GM12878 (cell line): ENCODE measurements at regions of chr1 and their contacts with region 1.

Region 1: DNA sequence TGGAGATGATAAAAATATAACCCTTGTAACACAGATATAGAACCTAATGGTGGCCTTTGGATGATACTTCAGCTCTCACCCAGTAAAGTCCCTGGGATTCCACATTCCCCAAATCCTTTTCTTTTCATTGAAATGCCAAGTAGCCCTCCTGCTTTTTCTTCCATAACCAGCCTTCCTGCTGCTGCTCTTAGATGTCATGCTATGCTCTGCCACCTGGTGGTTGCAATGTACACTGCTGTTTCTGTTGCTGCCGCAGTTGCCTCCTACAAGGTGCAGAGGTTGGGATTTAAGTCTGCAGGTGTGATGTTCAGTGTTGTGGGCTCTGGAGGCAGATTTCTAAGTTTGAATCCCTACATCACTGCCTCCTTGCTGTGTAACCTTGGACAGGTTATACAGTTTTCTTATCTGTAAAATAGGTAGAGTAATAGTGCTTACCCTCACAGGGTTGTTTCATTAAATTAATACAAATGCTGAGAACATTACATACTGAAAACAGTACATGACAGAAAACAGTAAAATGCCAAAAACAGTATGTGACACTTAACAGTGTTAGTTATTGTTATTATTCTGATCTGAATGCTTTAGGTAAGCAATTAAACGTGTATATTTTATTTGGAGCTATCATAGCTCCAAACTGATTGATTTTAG is 64.3 kb downstream of the CAMSAP2 start:
- DNase-seq: peak; percentile 61
- ATAC-seq: peak; percentile 98
- H3K4me3 ChIP-seq: no peak overlapping the region
- H3K27ac ChIP-seq: no peak overlapping the region
- H3K4me1 ChIP-seq: no peaks in the 10 kb centered on the region
- H3K27me3 ChIP-seq: no peaks in the 10 kb centered on the region
- CTCF ChIP-seq: peak; percentile 86 to 92 (median 92)
- EP300 ChIP-seq: no peak
- POLR2A ChIP-seq: no peak
- RAD21 ChIP-seq: peak; percentile 99

Region 2: GRCh38 chr1:200558866-200559459 is 244.0 kb before region 1 on chr1:
- CTCF ChIA-PET with region 1: interaction called, 17 read pairs
- POLR2A ChIA-PET with region 1: no interaction called
- RAD21 ChIA-PET with region 1: interaction called, 11 read pairs
- SMC1A ChIA-PET with region 1: interaction called, 6 read pairs
- in situ Hi-C with region 1: no loop called
- intact Hi-C with region 1: loop called (anchors 2 kb)
- DNase-seq: no peak
- ATAC-seq: peak; percentile 64
- H3K4me3 ChIP-seq: no peak overlapping the region
- H3K27ac ChIP-seq: no peak overlapping the region
- H3K4me1 ChIP-seq: peaks cover 17% of the 10 kb centered on the region
- H3K27me3 ChIP-seq: no peaks in the 10 kb centered on the region
- CTCF ChIP-seq: peak; percentile 56 to 77 (median 60)
- EP300 ChIP-seq: no peak
- POLR2A ChIP-seq: no peak
- RAD21 ChIP-seq: peak; percentile 82

Region 3: GRCh38 chr1:200738740-200739498 is 64.1 kb before region 1 on chr1 and contains the start of gene CAMSAP2:
- CTCF ChIA-PET with region 1: interaction called, 4 read pairs
- POLR2A ChIA-PET with region 1: no interaction called
- RAD21 ChIA-PET with region 1: no interaction called
- SMC1A ChIA-PET with region 1: interaction called, 4 read pairs
- in situ Hi-C with region 1: no loop called
- intact Hi-C with region 1: loop called (anchors 2 kb)
- DNase-seq: no peak
- ATAC-seq: peak; percentile 75
- H3K4me3 ChIP-seq: peak within 1 kb of the TSS; percentile 99
- H3K27ac ChIP-seq: peak within 1 kb of the TSS; percentile 88
- H3K4me1 ChIP-seq: peaks cover 5% of the 10 kb centered on the region; the same call in 1 of the 2 replicates
- H3K27me3 ChIP-seq: no peaks in the 10 kb centered on the region
- CTCF ChIP-seq: no peak
- EP300 ChIP-seq: no peak
- POLR2A ChIP-seq: peak; percentile 71
- RAD21 ChIP-seq: no peak
- polyA plus RNA-seq, gene CAMSAP2: 5.0 to 6.4 TPM

Region 4: DNA sequence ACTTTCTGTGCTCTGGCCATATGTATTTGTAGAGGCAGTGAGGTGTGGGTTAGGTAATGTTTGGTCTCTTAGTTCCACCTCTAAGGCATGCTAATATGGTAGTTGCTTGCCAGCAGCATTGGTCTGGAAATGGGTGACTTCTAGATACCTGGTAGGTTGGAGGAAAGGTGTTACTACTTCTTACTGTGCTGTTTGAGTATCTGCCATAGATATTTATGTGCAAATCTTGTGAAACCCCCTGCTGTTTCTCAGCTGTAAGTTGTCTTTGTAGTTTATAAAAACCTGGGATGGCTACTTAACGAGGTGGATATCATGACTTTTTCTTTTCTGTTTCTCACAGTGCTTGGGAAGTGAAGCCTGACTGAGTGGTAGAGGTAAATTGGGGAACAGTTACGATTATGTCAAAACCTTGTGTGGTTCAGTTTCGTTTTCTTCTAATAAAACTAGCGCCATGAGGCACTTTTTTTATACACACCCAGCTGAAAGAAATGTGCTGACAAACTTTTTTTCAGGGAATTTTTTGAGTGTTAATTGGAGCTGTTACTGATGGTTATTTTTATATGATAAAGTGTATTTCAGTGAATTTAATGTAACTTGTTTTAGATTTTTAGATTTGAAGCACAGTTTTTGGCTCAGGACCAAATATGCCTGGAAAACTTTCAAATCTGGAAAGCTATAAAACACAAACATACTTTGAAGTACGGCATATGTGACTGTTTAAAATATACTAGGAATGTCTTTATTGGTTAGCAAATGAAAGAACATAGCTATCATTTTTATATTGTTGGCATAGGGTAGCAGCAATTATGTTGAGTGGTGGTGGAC is 22.2 kb before region 1 on chr1:
- CTCF ChIA-PET with region 1: interaction called, 21 read pairs
- POLR2A ChIA-PET with region 1: interaction called, 3 read pairs
- RAD21 ChIA-PET with region 1: interaction called, 5 read pairs
- SMC1A ChIA-PET with region 1: interaction called, 10 read pairs
- in situ Hi-C with region 1: no loop called
- intact Hi-C with region 1: no loop called
- DNase-seq: peak; percentile 61
- ATAC-seq: peak; percentile 89
- H3K4me3 ChIP-seq: peak overlapping the region; percentile 4; the same call in 1 of the 2 replicates
- H3K27ac ChIP-seq: peak overlapping the region; percentile 71
- H3K4me1 ChIP-seq: peaks cover 10% of the 10 kb centered on the region
- H3K27me3 ChIP-seq: no peaks in the 10 kb centered on the region
- CTCF ChIP-seq: no peak
- EP300 ChIP-seq: no peak
- POLR2A ChIP-seq: no peak
- RAD21 ChIP-seq: no peak